Mucosa of descending colon (tissue), 3 donors: ENCODE measurements at regions of chr21 and their contacts with region 1.

Region 1: GRCh38 chr21:29477941-29478340 is 179.2 kb downstream of the BACH1 start:
- DNase-seq: no peak
- ATAC-seq: no peak
- H3K4me3 ChIP-seq: no peak overlapping the region
- H3K4me1 ChIP-seq: no peaks in the 10 kb centered on the region
- CTCF ChIP-seq: no peak

Region 2: GRCh38 chr21:29849735-29850176 is 371.8 kb after region 1 on chr21:
- intact Hi-C with region 1: loop called (anchors 2 to 10 kb)
- DNase-seq: peak in 1 of 3 donors; percentile 61
- ATAC-seq: peak; percentile 90
- H3K4me3 ChIP-seq: no peak overlapping the region
- H3K4me1 ChIP-seq: no peaks in the 10 kb centered on the region
- CTCF ChIP-seq: peak; percentile 18